ENCODE measurements at regions of chr13 and their contacts with region 1.

Region 1: GRCh38 chr13:41668130-41668757 is 210.9 kb downstream of the RGCC start:
- DNase-seq: peak; percentile 62
- ATAC-seq: peak; percentile 51
- H3K4me3 ChIP-seq: no peak overlapping the region
- H3K4me3 Mint-ChIP-seq: no peak overlapping the region
- H3K27ac ChIP-seq: no peak overlapping the region
- H3K27ac Mint-ChIP-seq: no peak overlapping the region
- H3K4me1 ChIP-seq: no peaks in the 10 kb centered on the region
- H3K4me1 Mint-ChIP-seq: no peaks in the 10 kb centered on the region
- H3K27me3 ChIP-seq: peaks cover 0 to 28% (median 7%) of the 10 kb centered on the region in 4 experiments
- H3K27me3 Mint-ChIP-seq: peaks cover 21% of the 10 kb centered on the region
- CTCF ChIP-seq: peak; percentile 76

Region 2: GRCh38 chr13:41678249-41678648 is 10.0 kb after region 1 on chr13:
- CTCF ChIA-PET with region 1: interaction called, 22 read pairs
- POLR2A ChIA-PET with region 1: no interaction called
- intact Hi-C with region 1: no loop called
- DNase-seq: no peak
- ATAC-seq: no peak
- H3K4me3 ChIP-seq: no peak overlapping the region
- H3K4me3 Mint-ChIP-seq: no peak overlapping the region
- H3K27ac ChIP-seq: no peak overlapping the region
- H3K27ac Mint-ChIP-seq: no peak overlapping the region
- H3K4me1 ChIP-seq: no peaks in the 10 kb centered on the region
- H3K4me1 Mint-ChIP-seq: no peaks in the 10 kb centered on the region
- H3K27me3 ChIP-seq: no peaks in the 10 kb centered on the region
- H3K27me3 Mint-ChIP-seq: no peaks in the 10 kb centered on the region
- CTCF ChIP-seq: no peak

Region 3: DNA sequence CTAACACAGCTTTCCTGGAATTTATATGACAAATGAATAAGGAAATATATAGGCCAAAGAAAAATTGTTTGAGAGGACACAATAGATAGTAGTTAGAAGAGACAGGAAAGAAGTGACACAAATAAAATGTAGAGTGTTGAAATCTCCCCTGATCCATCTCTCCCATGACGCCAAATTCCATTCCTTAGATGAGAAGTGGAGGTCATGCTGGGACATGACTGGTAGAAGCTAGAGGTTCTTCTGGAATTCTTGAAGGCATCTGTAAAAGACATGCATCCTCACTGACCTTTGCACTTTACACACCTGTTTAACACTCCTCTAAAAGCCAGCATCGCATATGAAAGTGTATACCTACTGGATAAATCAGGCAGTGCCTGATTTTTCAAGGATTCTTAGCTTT is 448.0 kb after region 1 on chr13:
- CTCF ChIA-PET with region 1: interaction called, 156 read pairs
- POLR2A ChIA-PET with region 1: no interaction called
- intact Hi-C with region 1: no loop called
- DNase-seq: no peak
- ATAC-seq: no peak
- H3K4me3 ChIP-seq: no peak overlapping the region
- H3K4me3 Mint-ChIP-seq: no peak overlapping the region
- H3K27ac ChIP-seq: no peak overlapping the region
- H3K27ac Mint-ChIP-seq: no peak overlapping the region
- H3K4me1 ChIP-seq: no peaks in the 10 kb centered on the region
- H3K4me1 Mint-ChIP-seq: no peaks in the 10 kb centered on the region
- H3K27me3 ChIP-seq: no peaks in the 10 kb centered on the region
- H3K27me3 Mint-ChIP-seq: no peaks in the 10 kb centered on the region
- CTCF ChIP-seq: no peak

Measured in B cell (primary cell).